ENCODE measurements at regions of chr10 and their contacts with region 1.

Region 1: DNA sequence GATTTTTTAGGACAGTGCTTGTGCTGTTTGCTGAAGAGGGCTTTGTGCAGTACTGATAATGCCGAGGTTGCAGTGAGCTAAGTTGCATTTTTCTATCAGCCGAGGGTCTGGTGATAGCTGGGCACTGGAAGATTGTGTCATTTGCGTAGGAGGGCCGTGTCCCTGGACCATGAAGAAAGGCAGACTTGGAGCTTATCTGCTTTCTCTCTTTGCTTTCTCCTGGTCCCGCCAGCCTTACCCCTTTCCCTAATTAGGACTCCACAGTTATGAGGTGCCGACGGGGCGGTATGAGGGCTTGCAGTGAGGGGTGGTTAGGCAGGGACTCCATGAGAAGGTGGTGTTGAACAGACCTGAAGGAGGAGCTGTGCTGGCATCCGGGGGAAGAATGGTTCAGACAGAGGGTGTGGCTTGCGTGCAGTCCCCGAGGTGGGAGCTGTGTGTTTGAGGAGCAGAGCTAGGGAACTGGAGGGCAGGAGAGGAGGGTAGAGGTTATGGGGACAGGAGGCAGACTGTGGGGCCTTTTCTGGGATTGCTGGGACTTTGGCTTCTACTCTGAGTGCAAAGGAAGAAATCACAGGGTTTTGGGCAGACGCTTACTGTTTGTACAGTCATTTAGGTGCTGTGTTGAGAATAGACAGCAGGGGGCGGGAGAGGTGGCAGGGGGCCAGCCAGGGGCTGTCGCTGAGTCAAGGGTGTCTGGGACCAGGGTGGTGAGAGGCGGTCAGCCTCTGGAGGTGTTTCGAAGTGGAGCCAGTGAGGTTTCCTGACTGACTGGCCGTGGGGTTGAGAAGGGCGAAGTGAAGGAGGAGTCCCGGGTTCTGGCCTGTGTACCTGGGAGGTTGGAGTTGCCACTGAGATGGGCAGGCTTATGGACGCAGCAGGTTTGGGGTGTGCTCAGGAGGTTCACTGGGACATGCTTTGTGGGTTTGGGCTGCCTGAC is 43.4 kb downstream of the PRF1 start:
- DNase-seq: peak; percentile 71 to 82
- ATAC-seq: peak; percentile 90 to 94 (median 93)
- H3K4me3 ChIP-seq: peak overlapping the region; percentile 35
- H3K4me3 Mint-ChIP-seq: peak overlapping the region; percentile 85
- H3K27ac ChIP-seq: peak overlapping the region; percentile 43
- H3K27ac Mint-ChIP-seq: peak overlapping the region; percentile 76 to 87
- H3K4me1 ChIP-seq: peaks cover 51% of the 10 kb centered on the region
- H3K4me1 Mint-ChIP-seq: peaks cover 38 to 56% of the 10 kb centered on the region in 2 donors
- H3K27me3 ChIP-seq: no peaks in the 10 kb centered on the region
- H3K27me3 Mint-ChIP-seq: no peaks in the 10 kb centered on the region
- CTCF ChIP-seq: peak; percentile 84

Region 2: DNA sequence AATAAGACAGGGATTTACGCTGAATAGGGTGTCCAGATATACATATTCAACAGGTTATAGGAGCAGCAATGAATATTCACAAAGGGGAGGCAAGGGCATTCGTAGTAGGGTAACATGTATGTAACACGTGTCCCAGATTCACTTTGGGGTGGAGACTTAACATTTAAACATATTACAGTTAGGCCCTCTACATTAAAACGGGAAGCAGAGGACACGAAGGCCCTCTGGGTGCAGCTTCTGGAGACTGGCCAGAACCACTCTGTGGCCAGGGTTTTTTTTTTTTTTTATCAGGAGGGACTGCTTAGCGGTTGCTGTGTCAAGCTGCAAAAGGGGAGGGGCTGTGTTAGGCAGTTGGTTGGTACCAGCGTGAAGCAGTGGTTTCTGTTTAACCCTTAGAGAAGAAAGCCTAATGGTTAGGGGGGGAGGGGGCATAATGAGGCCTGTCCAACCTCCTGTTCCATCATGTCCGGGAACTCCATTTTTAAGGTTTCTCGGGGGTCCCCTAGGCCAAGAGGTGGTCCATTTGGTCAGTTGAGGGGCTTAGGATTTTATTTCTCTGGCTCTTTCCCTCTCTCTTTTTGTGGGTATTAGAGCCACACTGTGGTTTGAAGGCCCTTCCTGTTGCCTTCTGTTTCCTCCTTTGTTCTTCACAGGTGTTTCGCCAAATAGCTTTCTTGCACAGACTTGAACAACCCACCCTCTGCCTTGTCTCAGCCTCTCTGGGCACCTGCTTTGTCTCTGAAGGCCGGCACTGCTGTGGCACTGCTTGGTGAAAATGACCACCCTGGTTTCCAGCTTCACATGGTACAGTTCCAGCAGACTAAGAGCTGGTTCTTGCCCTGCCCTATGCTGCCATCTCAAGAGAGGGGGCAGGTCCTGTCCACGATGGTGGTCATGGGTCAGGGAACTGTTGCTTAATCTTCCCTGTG is 17.0 kb after region 1 on chr10:
- intact Hi-C with region 1: loop called (anchors 1 kb)
- DNase-seq: peak; percentile 48 to 70
- ATAC-seq: peak; percentile 58 to 76 (median 73)
- H3K4me3 ChIP-seq: peak overlapping the region; percentile 18
- H3K4me3 Mint-ChIP-seq: peak overlapping the region; percentile 91
- H3K27ac ChIP-seq: peak overlapping the region; percentile 66
- H3K27ac Mint-ChIP-seq: peak overlapping the region; percentile 89 to 92
- H3K4me1 ChIP-seq: peaks cover 82% of the 10 kb centered on the region
- H3K4me1 Mint-ChIP-seq: peaks cover 83 to 84% of the 10 kb centered on the region in 2 donors
- H3K27me3 ChIP-seq: no peaks in the 10 kb centered on the region
- H3K27me3 Mint-ChIP-seq: no peaks in the 10 kb centered on the region
- CTCF ChIP-seq: no peak

Region 3: DNA sequence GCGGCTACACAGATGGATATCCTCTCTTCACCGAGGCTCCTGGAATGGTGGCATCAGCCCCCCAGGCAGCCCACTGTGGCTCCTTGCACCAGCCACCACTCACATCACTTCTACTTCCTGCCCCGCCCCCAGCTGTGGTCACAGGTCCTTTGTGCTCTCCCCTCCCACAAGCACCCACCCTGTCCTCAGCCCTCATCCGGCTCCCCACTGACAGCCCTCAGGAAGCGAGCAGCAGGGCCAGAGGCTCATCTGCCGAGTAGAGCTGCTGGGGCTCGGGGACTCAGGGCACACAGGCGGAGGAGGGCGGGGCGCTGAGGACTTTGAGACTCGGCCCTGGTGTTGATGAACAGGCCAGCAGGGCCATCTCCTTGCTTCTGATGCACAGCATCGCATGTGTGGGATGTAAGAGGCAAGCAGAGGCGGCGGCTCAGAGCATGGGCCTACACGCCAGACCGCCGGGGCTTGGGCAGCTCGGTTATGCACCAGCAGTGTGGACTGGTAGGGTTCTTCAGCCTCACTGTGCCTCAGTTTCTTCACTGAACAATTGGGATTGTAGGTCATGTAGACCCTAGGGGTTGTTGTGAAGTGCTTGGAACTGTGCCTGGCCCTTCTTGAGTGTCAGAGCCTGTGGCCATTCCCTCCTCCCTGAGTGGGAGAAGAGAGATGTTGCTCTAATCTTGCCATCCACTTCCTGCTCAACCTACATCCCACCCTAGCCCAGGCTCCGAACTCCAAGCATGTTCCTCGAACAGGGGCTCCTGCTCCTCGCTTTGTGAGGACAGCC is 43.7 kb after region 1 on chr10 and contains the start of gene PRF1:
- intact Hi-C with region 1: loop called (anchors 5 kb)
- DNase-seq: peak; percentile 88
- ATAC-seq: peak; percentile 54 to 79 (median 69)
- H3K4me3 ChIP-seq: peak within 1 kb of the TSS; percentile 88
- H3K4me3 Mint-ChIP-seq: peak within 1 kb of the TSS; percentile 100
- H3K27ac ChIP-seq: peak within 1 kb of the TSS; percentile 93
- H3K27ac Mint-ChIP-seq: peak within 1 kb of the TSS; percentile 95 to 97
- H3K4me1 ChIP-seq: peaks cover 67% of the 10 kb centered on the region
- H3K4me1 Mint-ChIP-seq: peaks cover 67 to 86% of the 10 kb centered on the region in 2 donors
- H3K27me3 ChIP-seq: no peaks in the 10 kb centered on the region
- H3K27me3 Mint-ChIP-seq: no peaks in the 10 kb centered on the region
- CTCF ChIP-seq: no peak
- total RNA-seq, gene PRF1: 1,641 to 2,133 (median 1,982) TPM

Region 4: DNA sequence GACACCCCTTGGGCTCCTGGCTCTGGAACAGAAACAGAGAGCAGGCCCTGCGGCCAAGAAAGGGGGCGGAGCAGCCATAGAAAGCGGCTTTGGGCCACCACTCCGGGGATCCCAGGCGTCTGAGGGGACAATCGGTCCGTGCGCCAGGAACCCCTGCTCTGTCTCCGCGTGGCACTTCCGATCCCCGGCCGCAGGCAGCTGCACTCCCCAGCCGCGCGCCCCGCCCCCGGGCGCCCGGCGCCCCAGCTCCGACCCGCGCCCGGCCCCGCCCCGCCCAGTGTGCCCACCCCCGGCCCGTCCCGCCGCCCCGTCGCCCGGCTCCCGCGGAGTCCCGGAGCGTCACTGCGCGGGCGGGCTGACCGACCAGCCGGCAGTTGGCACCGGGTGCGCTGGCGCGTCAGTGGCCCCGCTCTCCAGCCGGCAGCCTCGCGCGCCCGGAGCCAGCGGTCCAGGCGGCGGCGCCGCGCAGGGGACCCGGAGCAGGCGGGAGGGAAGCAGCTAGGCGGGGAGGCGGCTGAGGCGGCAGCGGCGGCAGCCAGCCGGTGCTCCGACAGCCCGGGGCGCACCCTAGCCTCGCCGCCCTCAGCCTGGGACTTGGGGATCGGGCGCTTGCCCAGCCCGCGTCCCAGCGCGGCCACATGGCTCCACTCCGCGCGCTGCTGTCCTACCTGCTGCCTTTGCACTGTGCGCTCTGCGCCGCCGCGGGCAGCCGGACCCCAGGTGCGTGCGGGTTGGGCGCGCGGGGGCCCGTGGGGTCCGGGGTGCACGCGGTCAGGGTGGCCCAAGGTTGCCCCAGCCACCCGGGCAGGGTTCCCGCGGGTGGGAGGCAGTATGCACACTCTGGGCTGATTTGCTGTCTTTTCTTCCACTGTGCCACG is 113.3 kb after region 1 on chr10 and contains the start of gene ADAMTS14:
- intact Hi-C with region 1: loop called (anchors 5 kb)
- DNase-seq: peak; percentile 28 to 38
- ATAC-seq: peak; percentile 40 to 78 (median 74)
- H3K4me3 ChIP-seq: peak within 1 kb of the TSS; percentile 22
- H3K4me3 Mint-ChIP-seq: peak within 1 kb of the TSS; percentile 86
- H3K27ac ChIP-seq: no peak within 1 kb of the TSS
- H3K27ac Mint-ChIP-seq: no peak within 1 kb of the TSS
- H3K4me1 ChIP-seq: peaks cover 13% of the 10 kb centered on the region
- H3K4me1 Mint-ChIP-seq: peaks cover 22 to 25% of the 10 kb centered on the region in 2 donors
- H3K27me3 ChIP-seq: no peaks in the 10 kb centered on the region
- H3K27me3 Mint-ChIP-seq: peaks cover 6 to 8% of the 10 kb centered on the region in 2 donors
- CTCF ChIP-seq: no peak
- total RNA-seq, gene ADAMTS14: 0.70 to 1.5 (median 1.1) TPM

Region 5: GRCh38 chr10:70758757-70759514 is 199.8 kb after region 1 on chr10:
- intact Hi-C with region 1: loop called (anchors 1 kb)
- DNase-seq: peak; percentile 63 to 82
- ATAC-seq: peak; percentile 40 to 77 (median 68)
- H3K4me3 ChIP-seq: no peak overlapping the region
- H3K4me3 Mint-ChIP-seq: no peak overlapping the region
- H3K27ac ChIP-seq: no peak overlapping the region
- H3K27ac Mint-ChIP-seq: peak overlapping the region in 1 of 2 donors; percentile 60
- H3K4me1 ChIP-seq: peaks cover 4% of the 10 kb centered on the region
- H3K4me1 Mint-ChIP-seq: peaks cover 15 to 16% of the 10 kb centered on the region in 2 donors
- H3K27me3 ChIP-seq: no peaks in the 10 kb centered on the region
- H3K27me3 Mint-ChIP-seq: no peaks in the 10 kb centered on the region
- CTCF ChIP-seq: peak; percentile 94

Region 6: DNA sequence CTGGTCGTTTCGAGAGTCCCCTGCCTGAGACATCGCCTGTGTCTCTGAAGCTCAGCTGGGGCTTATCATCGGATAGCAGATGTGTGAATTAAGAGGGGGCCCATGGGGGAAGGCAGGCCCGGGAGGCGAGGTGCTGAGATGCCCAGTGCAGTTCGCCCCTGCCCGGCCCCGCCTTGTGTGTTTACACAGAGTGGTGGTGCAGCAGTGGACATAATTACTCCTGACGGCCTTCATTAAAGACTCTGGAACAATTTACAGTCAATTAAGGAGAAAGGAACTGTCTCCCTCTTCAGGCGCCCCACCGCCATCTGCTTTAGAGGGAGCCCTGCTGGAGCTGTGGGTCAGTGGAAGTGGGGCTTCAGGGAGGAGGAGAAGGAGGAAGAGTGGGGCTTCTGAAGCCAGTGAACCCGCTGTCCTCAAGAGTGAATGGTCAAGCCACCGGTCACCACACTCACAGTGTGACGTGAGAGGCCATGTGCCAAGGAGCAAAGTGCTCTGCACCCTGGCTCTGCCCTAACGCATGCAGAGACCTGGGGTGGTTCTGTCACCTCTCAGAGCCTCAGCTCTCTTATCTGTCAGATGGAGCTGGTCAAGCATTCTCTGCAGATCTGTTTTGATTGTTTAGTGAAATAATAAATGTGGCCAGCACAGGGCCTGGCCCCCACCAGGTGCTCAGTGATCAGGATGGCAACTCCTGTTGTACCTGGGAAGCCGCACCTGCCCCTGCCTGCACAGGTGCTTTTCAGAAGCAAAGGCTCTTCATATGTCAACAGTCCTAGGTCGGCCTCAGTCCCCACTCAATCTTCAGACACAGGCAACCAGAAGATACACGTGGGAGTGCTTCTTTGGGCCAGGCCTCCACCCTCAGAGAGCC is 903.2 kb after region 1 on chr10:
- intact Hi-C with region 1: no loop called
- DNase-seq: no peak
- ATAC-seq: no peak
- H3K4me3 ChIP-seq: no peak overlapping the region
- H3K4me3 Mint-ChIP-seq: no peak overlapping the region
- H3K27ac ChIP-seq: no peak overlapping the region
- H3K27ac Mint-ChIP-seq: no peak overlapping the region
- H3K4me1 ChIP-seq: no peaks in the 10 kb centered on the region
- H3K4me1 Mint-ChIP-seq: no peaks in the 10 kb centered on the region
- H3K27me3 ChIP-seq: no peaks in the 10 kb centered on the region
- H3K27me3 Mint-ChIP-seq: no peaks in the 10 kb centered on the region
- CTCF ChIP-seq: no peak